Pancreas (tissue), 10 donors: ENCODE measurements at regions of chr5 and their contacts with region 1.

Region 1: DNA sequence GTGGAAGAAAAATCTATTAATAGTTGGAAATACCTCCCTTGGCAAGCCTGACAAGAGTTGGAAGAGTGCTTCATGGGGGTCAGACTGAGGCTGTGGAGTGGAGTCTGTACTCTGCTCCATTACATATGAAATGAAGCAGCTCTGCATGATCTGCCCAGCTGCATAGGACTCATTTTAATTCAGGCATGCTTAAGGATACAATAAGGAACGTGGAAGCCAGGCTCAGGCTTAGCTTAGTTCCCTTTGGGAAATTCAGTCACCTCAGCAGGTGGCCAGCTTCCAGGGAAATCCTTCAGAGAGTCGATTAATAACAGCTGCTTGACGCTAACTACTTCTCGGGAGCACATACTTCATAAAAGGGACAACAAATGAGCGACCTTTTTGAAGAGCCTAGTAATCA is 1672.9 kb upstream of the WWC1 start:
- DNase-seq: peak in 1 of 6 donors; percentile 11
- ATAC-seq: no peak
- H3K4me3 ChIP-seq: no peak overlapping the region
- H3K27ac ChIP-seq: no peak overlapping the region
- H3K4me1 ChIP-seq: no peaks in the 10 kb centered on the region
- H3K27me3 ChIP-seq: no peaks in the 10 kb centered on the region
- CTCF ChIP-seq: no peak

Region 2: DNA sequence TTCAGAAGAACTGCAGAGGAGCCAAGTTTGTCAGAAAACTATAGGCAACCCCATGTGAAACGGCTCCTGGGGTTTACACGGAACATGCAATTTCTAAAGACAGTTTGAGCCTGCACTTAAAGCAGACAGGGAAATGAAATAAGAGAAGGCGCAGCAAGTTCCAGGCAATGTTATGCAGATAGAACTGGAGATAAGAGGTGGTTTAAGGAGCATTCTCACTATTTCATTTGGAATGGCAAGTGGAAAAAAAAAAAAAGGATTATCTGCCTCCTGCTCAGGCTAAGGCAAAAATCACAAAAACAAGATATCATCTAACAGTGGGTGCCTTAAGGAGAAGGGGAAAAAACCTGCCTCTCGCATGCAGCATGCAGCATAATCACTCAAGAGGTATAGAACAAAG is 860.7 kb before region 1 on chr5:
- intact Hi-C with region 1: loop called in 1 of 3 experiments (anchors 10 kb)
- DNase-seq: no peak
- ATAC-seq: no peak
- H3K4me3 ChIP-seq: no peak overlapping the region
- H3K27ac ChIP-seq: no peak overlapping the region
- H3K4me1 ChIP-seq: peaks cover 0 to 5% (median 0%) of the 10 kb centered on the region in 3 donors
- H3K27me3 ChIP-seq: no peaks in the 10 kb centered on the region
- CTCF ChIP-seq: no peak

Region 3: GRCh38 chr5:166695326-166695725 is 76.8 kb after region 1 on chr5:
- intact Hi-C with region 1: no loop called
- DNase-seq: no peak
- ATAC-seq: no peak
- H3K4me3 ChIP-seq: no peak overlapping the region
- H3K27ac ChIP-seq: no peak overlapping the region
- H3K4me1 ChIP-seq: no peaks in the 10 kb centered on the region
- H3K27me3 ChIP-seq: no peaks in the 10 kb centered on the region
- CTCF ChIP-seq: no peak

Region 4: GRCh38 chr5:166979307-166979895 is 360.9 kb after region 1 on chr5:
- intact Hi-C with region 1: no loop called
- DNase-seq: no peak
- ATAC-seq: peak in 1 of 4 donors; percentile 0
- H3K4me3 ChIP-seq: peak overlapping the region; percentile 42 to 59 (median 53)
- H3K27ac ChIP-seq: peak overlapping the region in 1 of 4 donors; percentile 55
- H3K4me1 ChIP-seq: peaks cover 0 to 45% (median 29%) of the 10 kb centered on the region in 3 donors
- H3K27me3 ChIP-seq: no peaks in the 10 kb centered on the region
- CTCF ChIP-seq: no peak